Kidney (tissue), 22 donors: ENCODE measurements at regions of chr16 and their contacts with region 1.

Region 1: GRCh38 chr16:84754353-84754856 is 54.6 kb downstream of the USP10 start:
- DNase-seq: peak in 4 of 5 donors; percentile 82 to 91 (median 88)
- H3K4me3 ChIP-seq: peak overlapping the region in 1 of 3 donors; percentile 25
- H3K27ac ChIP-seq: no peak overlapping the region
- H3K4me1 ChIP-seq: peaks cover 0 to 8% (median 0%) of the 10 kb centered on the region in 3 donors
- H3K27me3 ChIP-seq: no peaks in the 10 kb centered on the region
- CTCF ChIP-seq: peak; percentile 83

Region 2: GRCh38 chr16:84952335-84953189 is 198.2 kb after region 1 on chr16:
- intact Hi-C with region 1: loop called (anchors 5 kb)
- DNase-seq: peak in 4 of 5 donors; percentile 85 to 90 (median 88)
- H3K4me3 ChIP-seq: no peak overlapping the region
- H3K27ac ChIP-seq: peak overlapping the region; percentile 23 to 49
- H3K4me1 ChIP-seq: peaks cover 0 to 5% (median 2%) of the 10 kb centered on the region in 3 donors
- H3K27me3 ChIP-seq: no peaks in the 10 kb centered on the region
- CTCF ChIP-seq: peak; percentile 96

Region 3: DNA sequence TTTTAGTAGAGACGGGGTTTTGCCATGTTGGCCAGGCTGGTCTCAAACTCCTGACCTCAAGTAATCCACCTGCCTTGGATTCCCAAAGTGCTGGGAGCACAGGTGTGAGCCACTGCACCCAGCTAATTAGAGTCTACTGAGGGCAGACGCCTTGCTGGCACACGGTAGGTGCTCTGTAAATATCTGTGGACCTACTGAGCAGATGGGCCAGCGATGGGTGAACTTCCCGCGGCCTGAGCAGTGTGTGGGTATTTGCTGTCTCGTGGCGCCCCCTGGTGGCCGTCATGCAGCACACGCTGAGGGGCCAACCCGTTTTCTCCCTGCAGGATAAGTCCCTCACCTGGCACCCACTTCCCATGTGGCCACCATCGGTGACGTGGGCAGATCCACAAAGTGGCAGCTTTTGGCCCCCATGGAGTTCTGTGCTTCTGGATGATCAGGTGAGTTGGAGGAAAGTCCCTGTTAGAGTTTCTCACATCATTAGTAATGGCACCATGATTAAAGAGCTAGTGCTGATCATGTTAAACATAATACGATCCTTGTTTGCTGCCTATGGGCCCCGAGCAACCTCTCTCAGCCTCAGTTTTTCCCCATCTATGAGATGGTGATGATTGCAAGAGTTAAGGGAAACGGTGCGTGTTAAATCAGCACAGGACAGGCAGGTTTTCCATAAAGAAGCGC is 216.2 kb after region 1 on chr16:
- intact Hi-C with region 1: loop called (anchors 5 kb)
- DNase-seq: peak; percentile 70 to 88 (median 85)
- H3K4me3 ChIP-seq: no peak overlapping the region
- H3K27ac ChIP-seq: no peak overlapping the region
- H3K4me1 ChIP-seq: peaks cover 0 to 4% (median 0%) of the 10 kb centered on the region in 3 donors
- H3K27me3 ChIP-seq: no peaks in the 10 kb centered on the region
- CTCF ChIP-seq: peak; percentile 89